HEK293 (cell line): ENCODE measurements at regions of chr19 and their contacts with region 1.

Region 1: GRCh38 chr19:58543826-58544590 is at the start of gene TRIM28:
- H3K4me3 ChIP-seq: peak within 1 kb of the TSS; percentile 67
- H3K27ac ChIP-seq: peak within 1 kb of the TSS; percentile 99
- H3K4me1 ChIP-seq: peaks cover 13% of the 10 kb centered on the region
- CTCF ChIP-seq: no peak; the same call in 1 of the 2 replicates

Region 2: GRCh38 chr19:58380722-58381466 is 163.1 kb before region 1 on chr19 and contains the start of gene ZNF837:
- CTCF ChIA-PET with region 1: no interaction called
- POLR2A ChIA-PET with region 1: interaction called, 10 read pairs
- H3K4me3 ChIP-seq: peak within 1 kb of the TSS; percentile 83
- H3K27ac ChIP-seq: peak within 1 kb of the TSS; percentile 87
- H3K4me1 ChIP-seq: peaks cover 11% of the 10 kb centered on the region
- CTCF ChIP-seq: no peak

Region 3: GRCh38 chr19:58451358-58452101 is 92.5 kb before region 1 on chr19 and contains the start of gene ZNF324B:
- CTCF ChIA-PET with region 1: no interaction called
- POLR2A ChIA-PET with region 1: interaction called, 11 read pairs
- H3K4me3 ChIP-seq: peak within 1 kb of the TSS; percentile 93
- H3K27ac ChIP-seq: peak within 1 kb of the TSS; percentile 38; the same call in 1 of the 2 replicates
- H3K4me1 ChIP-seq: peaks cover 7% of the 10 kb centered on the region; the same call in 1 of the 2 replicates
- CTCF ChIP-seq: peak; percentile 67

Region 4: GRCh38 chr19:58475714-58476497 is 68.1 kb before region 1 on chr19 and contains the start of gene ZNF446:
- CTCF ChIA-PET with region 1: no interaction called
- POLR2A ChIA-PET with region 1: interaction called, 10 read pairs
- H3K4me3 ChIP-seq: peak within 1 kb of the TSS; percentile 75
- H3K27ac ChIP-seq: peak within 1 kb of the TSS; percentile 69
- H3K4me1 ChIP-seq: peaks cover 7% of the 10 kb centered on the region; the same call in 1 of the 2 replicates
- CTCF ChIP-seq: peak; percentile 80

Region 5: GRCh38 chr19:58531034-58531840 is 12.8 kb before region 1 on chr19:
- CTCF ChIA-PET with region 1: interaction called, 6 read pairs
- POLR2A ChIA-PET with region 1: interaction called, 21 read pairs
- H3K4me3 ChIP-seq: no peak overlapping the region
- H3K27ac ChIP-seq: no peak overlapping the region
- H3K4me1 ChIP-seq: no peaks in the 10 kb centered on the region
- CTCF ChIP-seq: no peak

Region 6: DNA sequence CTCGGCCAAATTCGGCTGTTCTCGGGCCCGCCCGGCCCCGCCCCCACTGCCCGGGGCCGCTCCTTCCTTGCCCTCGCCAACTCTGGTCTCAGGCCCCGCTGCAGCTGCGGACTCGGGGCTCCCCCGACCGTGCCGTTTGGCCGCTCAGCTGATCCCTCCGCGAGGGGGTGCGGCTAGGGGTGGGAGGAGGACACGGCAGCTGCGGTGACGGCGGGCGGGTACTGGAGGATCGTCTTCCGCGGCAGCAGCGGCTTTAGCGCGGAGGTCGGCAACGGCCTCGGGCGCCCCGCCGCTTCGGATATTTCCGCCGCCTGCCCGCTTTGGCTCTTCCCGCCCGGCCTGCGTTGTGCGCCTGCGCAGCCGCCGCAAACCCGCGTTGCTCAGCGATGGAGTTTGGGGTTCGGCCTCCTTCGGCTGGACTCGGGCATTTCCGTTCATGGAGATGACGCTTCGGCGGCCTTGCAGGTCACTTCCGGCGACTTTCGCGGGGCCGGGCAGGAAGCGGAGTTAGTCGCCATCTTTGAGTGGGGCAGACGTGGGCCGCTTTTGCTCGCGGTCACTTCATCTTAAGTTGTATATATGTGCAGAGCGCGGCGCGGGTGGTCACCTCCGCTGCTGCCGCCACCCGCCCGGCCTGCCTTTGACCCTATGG is 14.7 kb after region 1 on chr19:
- CTCF ChIA-PET with region 1: interaction called, 6 read pairs
- POLR2A ChIA-PET with region 1: interaction called, 128 read pairs
- H3K4me3 ChIP-seq: peak overlapping the region; percentile 89
- H3K27ac ChIP-seq: peak overlapping the region; percentile 99
- H3K4me1 ChIP-seq: peaks cover 17% of the 10 kb centered on the region
- CTCF ChIP-seq: no peak

Region 7: GRCh38 chr19:58572818-58573657 is 29.0 kb after region 1 on chr19 and contains the start of gene MZF1:
- CTCF ChIA-PET with region 1: no interaction called
- POLR2A ChIA-PET with region 1: interaction called, 22 read pairs
- H3K4me3 ChIP-seq: peak within 1 kb of the TSS; percentile 67
- H3K27ac ChIP-seq: peak within 1 kb of the TSS; percentile 77
- H3K4me1 ChIP-seq: peaks cover 8% of the 10 kb centered on the region
- CTCF ChIP-seq: peak; percentile 97